Left lung (tissue), 14 donors: ENCODE measurements at regions of chr12 and their contacts with region 1.

Region 1: GRCh38 chr12:3275171-3276041 is 198.2 kb downstream of the TSPAN9 start:
- DNase-seq: peak; percentile 57 to 90 (median 72)
- ATAC-seq: peak; percentile 87
- H3K4me3 ChIP-seq: no peak overlapping the region
- H3K27ac ChIP-seq: no peak overlapping the region
- H3K4me1 ChIP-seq: peaks cover 0 to 10% of the 10 kb centered on the region in 2 donors
- H3K27me3 ChIP-seq: no peaks in the 10 kb centered on the region
- CTCF ChIP-seq: peak; percentile 98

Region 2: DNA sequence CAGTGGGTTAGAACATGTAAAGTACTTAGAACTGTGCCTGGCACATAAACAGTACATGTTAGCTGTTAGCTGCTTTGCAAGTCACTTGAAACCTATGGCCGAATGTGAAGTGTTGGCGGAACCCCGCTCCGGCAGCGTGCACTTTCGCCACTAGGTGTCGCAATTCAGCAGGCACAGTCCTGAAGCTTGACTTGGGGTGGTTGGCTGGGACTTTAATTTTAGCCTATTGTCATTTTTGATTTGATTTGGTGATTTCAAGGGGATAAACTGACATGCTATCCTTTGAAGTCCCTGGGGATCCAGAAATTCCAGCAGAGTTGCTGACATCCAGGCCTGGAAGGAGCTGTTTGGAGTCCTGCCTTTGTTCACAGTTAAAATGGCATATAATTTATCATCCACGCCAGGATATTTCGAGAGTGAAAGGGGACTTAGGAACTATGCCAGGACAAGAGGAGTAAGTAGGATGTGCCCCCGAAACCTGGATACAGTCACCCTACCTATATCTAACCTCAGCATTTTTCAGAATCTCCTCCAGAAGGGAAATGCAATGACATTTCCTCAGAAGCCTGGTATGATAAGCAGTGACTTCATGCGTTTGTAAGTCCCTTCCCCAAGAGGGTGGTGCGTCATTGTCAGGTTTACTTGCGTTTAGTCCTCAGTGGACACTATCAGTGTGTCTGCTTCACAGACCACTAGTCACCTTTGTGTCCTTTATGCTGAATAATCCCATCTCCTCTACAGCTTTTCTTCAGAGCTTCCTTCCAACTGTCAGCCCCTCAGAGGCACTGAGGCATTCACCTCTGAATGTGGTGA is 201.8 kb before region 1 on chr12:
- intact Hi-C with region 1: loop called in 1 of 2 experiments (anchors 5 kb)
- DNase-seq: peak; percentile 79 to 93 (median 88)
- ATAC-seq: peak; percentile 57
- H3K4me3 ChIP-seq: no peak overlapping the region
- H3K27ac ChIP-seq: peak overlapping the region in 1 of 2 donors; percentile 18
- H3K4me1 ChIP-seq: peaks cover 3 to 28% of the 10 kb centered on the region in 2 donors
- H3K27me3 ChIP-seq: peaks cover 0 to 36% of the 10 kb centered on the region in 2 donors
- CTCF ChIP-seq: peak; percentile 98 to 99

Region 3: GRCh38 chr12:3135522-3136461 is 139.6 kb before region 1 on chr12:
- intact Hi-C with region 1: loop called (anchors 5 to 10 kb)
- DNase-seq: peak in 2 of 4 donors; percentile 66 to 85
- ATAC-seq: peak; percentile 81
- H3K4me3 ChIP-seq: no peak overlapping the region
- H3K27ac ChIP-seq: no peak overlapping the region
- H3K4me1 ChIP-seq: peaks cover 11 to 36% of the 10 kb centered on the region in 2 donors
- H3K27me3 ChIP-seq: peaks cover 0 to 30% of the 10 kb centered on the region in 2 donors
- CTCF ChIP-seq: peak; percentile 68 to 88